ENCODE measurements at regions of chr3 and their contacts with region 1.

Region 1: DNA sequence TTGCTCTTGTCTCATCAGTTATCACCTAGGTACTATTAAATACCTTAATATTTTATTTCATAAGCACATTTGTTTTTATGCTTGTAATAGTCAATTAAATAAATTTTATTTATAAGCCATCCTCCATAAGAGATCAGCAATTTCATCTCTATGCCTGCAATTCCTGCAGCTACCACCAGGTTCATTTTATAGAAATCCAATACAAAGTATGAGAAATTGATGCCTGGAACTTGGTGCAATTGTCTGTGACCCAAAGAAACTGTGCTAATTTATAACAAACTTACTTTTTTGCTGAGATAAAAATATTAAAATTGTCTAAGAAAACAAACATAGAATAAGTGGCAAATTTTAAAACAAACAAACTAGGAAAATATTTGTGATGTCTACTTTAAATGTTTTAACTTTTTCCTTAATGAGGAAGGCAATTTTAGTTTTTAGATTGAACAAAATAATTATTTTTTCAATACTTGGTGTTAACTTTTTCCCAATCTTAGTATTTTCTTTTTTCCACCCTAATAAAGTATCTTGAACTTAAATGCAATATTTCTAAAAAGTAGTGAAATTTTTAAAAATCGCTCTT is 1026.6 kb downstream of the ROBO1 start:
- DNase-seq: no peak
- H3K4me3 ChIP-seq: no peak overlapping the region
- H3K27ac ChIP-seq: no peak overlapping the region
- H3K4me1 ChIP-seq: 0 out of 7 replicates have a peak, but pooled peaks cover 0 to 3% (median 0%) of the 10 kb centered on the region in 4 experiments
- H3K27me3 ChIP-seq: no peaks in the 10 kb centered on the region
- CTCF ChIP-seq: peak in 1 of 3 experiments; percentile 38; a peak in 1 of 4 replicates
- EP300 ChIP-seq: no peak
- POLR2A ChIP-seq: no peak
- RAD21 ChIP-seq: no peak

Region 2: GRCh38 chr3:78562328-78562727 is 178.8 kb before region 1 on chr3:
- CTCF ChIA-PET with region 1: no interaction called
- POLR2A ChIA-PET with region 1: no interaction called
- DNase-seq: no peak
- H3K4me3 ChIP-seq: no peak overlapping the region
- H3K27ac ChIP-seq: no peak overlapping the region
- H3K4me1 ChIP-seq: no peaks in the 10 kb centered on the region
- H3K27me3 ChIP-seq: no peaks in the 10 kb centered on the region
- CTCF ChIP-seq: no peak
- EP300 ChIP-seq: no peak
- POLR2A ChIP-seq: no peak
- RAD21 ChIP-seq: no peak

Region 3: DNA sequence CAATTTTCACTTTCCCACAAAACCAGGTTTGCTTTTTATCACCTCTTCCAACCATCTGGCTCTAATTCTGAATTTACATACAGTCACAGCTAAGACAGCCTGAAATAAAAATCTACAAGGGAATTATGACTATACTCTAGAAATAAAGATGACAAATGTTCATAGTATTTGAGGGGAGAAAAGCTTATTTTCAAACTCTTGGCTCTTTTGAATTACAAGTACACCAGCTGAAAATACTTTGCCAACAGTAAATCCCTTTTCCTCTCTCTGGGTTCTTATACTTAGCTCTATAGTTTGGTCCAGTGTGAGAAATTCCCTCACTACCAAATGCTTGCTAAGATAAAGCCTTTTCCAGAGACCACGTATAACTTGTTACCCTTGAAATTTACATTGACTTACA is 11.2 kb before region 1 on chr3:
- CTCF ChIA-PET with region 1: interaction called, 26 read pairs
- POLR2A ChIA-PET with region 1: no interaction called
- DNase-seq: no peak
- H3K4me3 ChIP-seq: no peak overlapping the region
- H3K27ac ChIP-seq: no peak overlapping the region
- H3K4me1 ChIP-seq: peaks cover 0 to 6% (median 2%) of the 10 kb centered on the region in 4 experiments; a peak in 3 of 7 replicates
- H3K27me3 ChIP-seq: no peaks in the 10 kb centered on the region
- CTCF ChIP-seq: no peak
- EP300 ChIP-seq: no peak
- POLR2A ChIP-seq: no peak
- RAD21 ChIP-seq: no peak

Region 4: DNA sequence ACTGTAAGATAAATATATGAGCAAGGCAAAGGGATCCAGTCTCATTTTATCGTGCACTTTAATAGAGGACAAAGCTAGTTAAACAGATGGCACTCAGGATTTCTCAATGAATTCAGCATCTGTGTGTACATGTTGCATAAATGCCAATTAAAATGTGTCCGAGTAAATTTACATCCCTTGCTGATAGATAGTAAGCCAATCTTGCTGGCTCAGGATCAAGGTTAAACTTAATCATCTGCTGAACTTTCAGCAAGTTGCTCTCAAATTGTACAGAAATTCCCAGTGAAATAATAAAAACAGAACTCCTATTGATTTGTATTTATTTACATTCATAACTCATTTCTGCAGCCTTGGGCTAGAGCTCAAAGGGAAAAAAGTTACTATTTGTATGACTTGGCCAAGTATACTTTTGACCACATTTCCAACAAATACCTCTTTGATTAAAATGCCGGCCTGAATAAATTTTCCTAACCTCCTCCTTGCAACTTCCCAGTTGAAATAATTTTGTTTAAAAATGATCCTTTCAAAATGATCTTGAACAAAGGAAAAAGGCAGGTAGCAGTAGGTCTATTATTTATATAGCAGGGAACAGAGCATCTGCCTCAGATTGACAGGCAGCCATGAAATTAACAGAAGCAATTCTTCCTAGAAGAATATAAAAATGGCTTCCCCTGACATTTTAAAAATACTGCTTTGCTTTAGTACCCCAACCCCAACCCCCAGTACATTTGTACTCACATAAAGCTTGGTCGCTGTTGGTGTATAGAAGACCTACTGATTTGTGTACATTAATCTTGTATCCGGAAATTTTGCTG is 24.7 kb after region 1 on chr3:
- CTCF ChIA-PET with region 1: no interaction called
- POLR2A ChIA-PET with region 1: no interaction called
- DNase-seq: no peak
- H3K4me3 ChIP-seq: no peak overlapping the region
- H3K27ac ChIP-seq: no peak overlapping the region
- H3K4me1 ChIP-seq: no peaks in the 10 kb centered on the region
- H3K27me3 ChIP-seq: peaks cover 0 to 1% (median 0%) of the 10 kb centered on the region in 4 experiments; a peak in 1 of 7 replicates
- CTCF ChIP-seq: no peak
- EP300 ChIP-seq: no peak
- POLR2A ChIP-seq: no peak
- RAD21 ChIP-seq: no peak

Region 5: GRCh38 chr3:78804251-78805037 is 63.3 kb after region 1 on chr3:
- CTCF ChIA-PET with region 1: no interaction called
- POLR2A ChIA-PET with region 1: no interaction called
- DNase-seq: no peak
- H3K4me3 ChIP-seq: no peak overlapping the region
- H3K27ac ChIP-seq: no peak overlapping the region
- H3K4me1 ChIP-seq: peaks cover 0 to 4% (median under 1%) of the 10 kb centered on the region in 4 experiments; a peak in 2 of 7 replicates
- H3K27me3 ChIP-seq: no peaks in the 10 kb centered on the region
- CTCF ChIP-seq: no peak
- EP300 ChIP-seq: no peak
- POLR2A ChIP-seq: no peak
- RAD21 ChIP-seq: no peak

Measured in H1 (cell line).